Activated CD8-positive, alpha-beta T cell treated with anti-CD3 and anti-CD28 coated beads, Interleukin-2, amount 10 ng/mL, durations not matched to agents 7 days and 5 days (primary cell): ENCODE measurements at regions of chr11 and their contacts with region 1.

Region 1: DNA sequence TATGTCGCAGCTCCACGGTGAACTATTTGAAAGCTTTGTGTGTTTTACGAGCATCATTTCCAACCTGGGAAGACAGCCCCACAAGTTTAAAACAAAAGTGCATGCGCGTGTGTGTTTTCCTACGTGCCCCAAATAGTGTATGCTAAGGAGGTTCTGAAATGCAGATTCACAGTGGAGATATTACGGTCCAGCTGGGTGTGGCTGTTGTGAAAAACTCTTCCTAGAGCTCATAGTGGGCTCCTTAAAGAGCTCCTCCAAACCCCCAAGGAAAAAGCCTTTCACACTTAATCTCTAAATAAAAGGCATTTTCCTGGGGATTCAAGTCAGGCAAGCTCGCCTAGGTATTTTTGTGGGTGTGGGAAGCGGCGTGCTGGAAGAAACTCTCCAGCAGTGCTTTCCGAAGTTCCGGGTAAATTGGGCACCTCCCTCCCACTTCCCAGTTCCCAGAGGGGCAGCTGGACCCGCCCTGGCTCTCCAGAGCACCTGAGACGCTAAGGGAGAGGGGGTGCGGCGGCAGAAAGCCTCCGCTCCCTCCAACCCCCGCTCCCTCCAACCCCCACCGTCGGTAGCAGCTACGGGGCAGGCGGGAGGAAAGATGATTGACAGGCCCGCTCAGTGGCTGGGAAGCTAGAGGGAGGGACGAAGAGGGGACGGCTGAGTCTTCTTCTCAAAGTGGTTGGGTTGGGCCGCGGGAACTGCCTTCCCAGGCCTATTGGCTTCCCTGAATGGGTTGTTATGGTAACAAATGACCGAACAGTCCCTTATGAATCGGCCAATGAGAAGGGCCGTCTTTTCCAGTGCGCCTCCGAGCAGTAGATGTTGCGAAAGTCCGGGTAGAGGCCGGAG is 558 bp upstream of the PCF11 start:
- DNase-seq: peak; percentile 99
- ATAC-seq: peak; percentile 92
- H3K4me3 Mint-ChIP-seq: peak overlapping the region; percentile 100
- H3K27ac Mint-ChIP-seq: peak overlapping the region; percentile 100
- H3K4me1 Mint-ChIP-seq: peaks cover 33% of the 10 kb centered on the region
- H3K27me3 Mint-ChIP-seq: no peaks in the 10 kb centered on the region

Region 2: DNA sequence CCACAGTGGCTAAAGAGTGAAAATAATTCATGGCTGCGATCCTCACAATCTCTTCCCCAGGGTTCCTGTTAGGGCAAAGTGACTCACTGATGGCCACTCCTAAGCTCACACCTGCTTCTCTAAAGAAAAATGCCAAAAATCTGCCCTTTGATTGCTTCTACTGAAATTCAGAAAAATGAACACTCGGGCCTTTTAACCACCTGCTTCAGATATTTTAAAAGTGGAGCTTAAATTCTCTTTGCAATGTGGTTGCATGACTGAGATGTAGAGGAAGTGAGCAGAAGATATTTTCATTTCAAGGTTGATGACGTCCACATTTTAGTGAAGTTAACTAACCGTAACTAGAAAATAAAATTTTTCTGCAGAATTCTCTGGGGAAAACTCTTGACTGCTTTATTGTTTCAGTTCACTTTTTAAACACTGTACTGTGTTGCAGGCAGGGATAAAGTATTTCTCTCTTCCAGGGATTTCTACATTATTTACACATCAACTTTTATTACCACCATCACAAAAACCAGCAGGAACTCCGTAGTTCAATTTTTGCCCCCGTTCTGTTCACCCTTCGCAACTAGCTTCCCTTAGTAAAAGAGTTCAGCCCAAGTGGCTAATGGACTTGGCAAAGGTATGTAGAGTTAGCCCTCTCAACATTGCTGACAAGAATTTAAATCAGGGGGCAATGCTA is 93.2 kb before region 1 on chr11:
- CTCF ChIA-PET with region 1: interaction called, 3 read pairs
- POLR2A ChIA-PET with region 1: interaction called, 12 read pairs
- DNase-seq: peak; percentile 42
- ATAC-seq: peak; percentile 76
- H3K4me3 Mint-ChIP-seq: peak overlapping the region; percentile 79
- H3K27ac Mint-ChIP-seq: peak overlapping the region; percentile 97
- H3K4me1 Mint-ChIP-seq: peaks cover 37% of the 10 kb centered on the region
- H3K27me3 Mint-ChIP-seq: no peaks in the 10 kb centered on the region

Region 3: DNA sequence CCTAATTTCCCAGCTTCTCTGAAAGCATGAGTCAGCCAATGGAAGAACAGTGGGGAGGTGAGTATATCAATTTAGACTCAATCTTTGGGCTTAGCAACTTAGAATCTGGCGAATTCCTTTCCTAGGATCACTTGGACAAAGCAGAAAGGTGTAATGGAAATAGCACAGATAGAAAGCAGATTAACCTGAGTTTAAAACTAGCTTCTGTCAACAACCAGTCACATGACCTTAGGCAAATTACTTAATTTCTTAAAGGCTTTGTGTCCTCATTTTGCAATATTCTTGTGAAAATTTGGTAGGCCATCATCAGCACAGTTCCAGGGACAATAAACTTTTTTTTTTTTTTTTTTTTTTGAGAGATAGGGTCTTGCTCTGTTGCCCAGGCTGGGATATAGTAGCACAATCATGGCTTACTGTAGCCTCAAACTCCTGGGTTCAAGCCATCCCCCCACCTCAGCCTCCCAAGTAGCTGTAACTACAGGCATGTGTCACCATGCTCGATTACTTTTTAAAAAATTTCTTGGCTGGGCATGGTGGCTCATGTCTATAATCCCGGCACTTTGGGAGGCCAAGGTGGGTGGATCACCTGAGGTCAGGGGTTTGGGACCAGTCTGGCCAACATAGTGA is 40.2 kb before region 1 on chr11:
- CTCF ChIA-PET with region 1: interaction called, 5 read pairs
- POLR2A ChIA-PET with region 1: interaction called, 27 read pairs
- DNase-seq: no peak
- ATAC-seq: no peak
- H3K4me3 Mint-ChIP-seq: peak overlapping the region; percentile 82
- H3K27ac Mint-ChIP-seq: peak overlapping the region; percentile 93
- H3K4me1 Mint-ChIP-seq: peaks cover 47% of the 10 kb centered on the region
- H3K27me3 Mint-ChIP-seq: no peaks in the 10 kb centered on the region

Region 4: DNA sequence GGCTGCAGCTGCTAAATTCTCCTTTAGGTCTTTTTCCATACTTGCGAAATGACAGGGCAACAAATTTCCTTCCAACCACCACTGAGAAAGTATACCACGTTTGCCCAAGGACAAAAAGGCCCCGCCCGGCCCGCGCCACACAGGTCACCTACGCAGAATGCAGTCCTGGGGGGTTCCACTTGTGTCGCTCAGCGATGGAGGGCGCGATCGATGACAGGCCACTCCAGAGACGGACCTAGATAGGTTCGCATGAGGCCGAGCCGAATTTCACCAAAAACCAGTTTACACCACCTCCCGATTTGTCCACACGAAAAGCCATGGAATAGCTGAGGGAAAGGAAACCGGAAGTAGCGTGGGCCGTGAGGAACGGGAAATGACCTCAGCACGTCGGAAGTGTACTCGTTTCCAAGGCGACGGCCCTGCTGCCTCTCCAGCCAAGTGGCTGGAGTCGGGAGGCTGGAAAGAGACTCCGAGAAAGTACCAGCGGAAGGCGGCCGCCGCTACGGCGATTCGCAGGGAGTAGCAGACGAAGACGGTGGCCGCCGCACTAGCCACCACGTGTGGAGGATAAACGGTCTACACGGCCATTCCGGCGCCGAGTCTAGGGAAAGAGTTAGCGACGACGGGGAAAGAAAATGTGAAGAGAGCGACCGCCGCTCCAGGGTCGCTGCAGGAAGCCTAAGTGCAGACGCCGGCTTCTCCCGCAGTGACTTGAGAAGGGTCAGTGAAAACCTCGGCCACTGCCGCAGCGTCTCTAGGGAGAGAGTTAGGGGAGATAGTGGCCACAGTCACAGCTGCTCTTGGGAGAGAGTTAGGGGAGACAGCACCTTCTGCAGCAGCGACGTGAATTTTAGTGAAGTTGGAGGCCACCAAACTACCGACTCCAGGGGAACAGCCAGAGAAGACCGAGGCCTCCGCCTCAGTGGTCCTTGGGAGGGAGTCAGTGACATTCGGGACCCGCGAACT is 37.2 kb after region 1 on chr11 and contains the start of gene ANKRD42:
- CTCF ChIA-PET with region 1: interaction called, 3 read pairs
- POLR2A ChIA-PET with region 1: interaction called, 15 read pairs
- DNase-seq: peak; percentile 91
- ATAC-seq: peak; percentile 77
- H3K4me3 Mint-ChIP-seq: peak within 1 kb of the TSS; percentile 92
- H3K27ac Mint-ChIP-seq: peak within 1 kb of the TSS; percentile 99
- H3K4me1 Mint-ChIP-seq: peaks cover 41% of the 10 kb centered on the region
- H3K27me3 Mint-ChIP-seq: no peaks in the 10 kb centered on the region
- total RNA-seq, gene ANKRD42: 4.2 to 4.5 TPM